ENCODE measurements at regions of chr20 and their contacts with region 1.

Region 1: DNA sequence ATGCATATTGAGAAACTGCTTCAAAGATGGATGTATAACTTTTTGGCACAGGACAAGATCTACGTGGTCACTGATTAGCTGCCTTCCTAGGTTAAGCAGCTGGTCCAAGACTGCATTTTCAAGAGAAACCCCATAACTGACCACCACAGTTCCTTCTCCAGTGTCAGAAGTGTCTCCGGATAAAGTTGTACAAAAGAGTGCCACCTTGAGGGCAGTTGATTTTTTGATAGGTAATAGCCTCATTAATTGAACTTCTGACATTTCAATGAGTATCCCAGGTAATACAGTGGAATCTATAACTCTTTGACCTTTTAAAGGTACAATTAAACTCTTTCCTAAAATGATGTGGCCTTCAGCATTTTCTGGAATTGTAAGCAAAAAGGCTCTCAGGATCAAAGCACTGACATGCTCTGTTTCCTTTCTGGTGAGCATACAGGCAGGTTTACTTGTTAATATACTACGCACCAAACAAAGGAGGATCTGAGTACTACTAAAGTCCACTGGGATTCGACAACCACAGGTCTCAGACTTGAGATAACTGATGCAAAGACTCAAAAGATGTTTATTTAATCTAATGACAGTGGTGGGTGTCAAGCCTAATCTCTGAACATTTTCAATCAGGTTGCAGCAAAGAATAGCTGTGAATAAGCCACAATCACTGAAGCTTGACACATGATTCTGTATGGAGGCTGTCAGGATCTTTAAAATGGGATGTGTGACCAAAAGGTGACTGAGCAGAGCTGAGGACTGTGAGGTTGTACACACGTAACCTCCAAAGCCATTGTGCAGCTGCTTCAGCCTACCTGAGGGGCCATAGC is 21.2 kb downstream of the MKKS start:
- DNase-seq: no peak
- H3K4me3 Mint-ChIP-seq: no peak overlapping the region
- H3K27ac Mint-ChIP-seq: no peak overlapping the region
- H3K4me1 Mint-ChIP-seq: peaks cover 21% of the 10 kb centered on the region
- H3K27me3 Mint-ChIP-seq: no peaks in the 10 kb centered on the region
- CTCF ChIP-seq: no peak

Region 2: DNA sequence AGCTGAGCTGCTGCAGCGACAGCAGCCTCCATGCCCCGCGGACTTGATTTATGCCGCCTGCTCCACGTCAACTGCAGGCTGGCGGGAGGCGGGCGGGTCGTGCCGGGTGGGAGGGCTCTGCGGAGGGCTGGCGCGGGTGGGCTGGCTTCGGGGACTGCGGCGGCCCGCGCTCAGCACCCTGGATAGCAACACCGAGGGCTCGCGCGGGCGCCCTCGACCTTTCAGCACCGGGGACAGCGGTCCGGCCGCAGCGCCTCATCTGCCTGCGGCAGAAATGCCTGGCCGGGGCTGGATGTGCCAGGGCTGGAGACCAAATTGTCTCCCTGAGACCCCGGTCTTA is 193.4 kb before region 1 on chr20:
- CTCF ChIA-PET with region 1: no interaction called
- intact Hi-C with region 1: loop called (anchors 10 kb)
- DNase-seq: peak; percentile 78
- H3K4me3 Mint-ChIP-seq: peak overlapping the region; percentile 71
- H3K27ac Mint-ChIP-seq: no peak overlapping the region
- H3K4me1 Mint-ChIP-seq: peaks cover 8% of the 10 kb centered on the region
- H3K27me3 Mint-ChIP-seq: peaks cover 49% of the 10 kb centered on the region
- CTCF ChIP-seq: no peak

Measured in Calu3 (cell line).